Heart left ventricle (tissue), 16 donors: ENCODE measurements at regions of chr10 and their contacts with region 1.

Region 1: DNA sequence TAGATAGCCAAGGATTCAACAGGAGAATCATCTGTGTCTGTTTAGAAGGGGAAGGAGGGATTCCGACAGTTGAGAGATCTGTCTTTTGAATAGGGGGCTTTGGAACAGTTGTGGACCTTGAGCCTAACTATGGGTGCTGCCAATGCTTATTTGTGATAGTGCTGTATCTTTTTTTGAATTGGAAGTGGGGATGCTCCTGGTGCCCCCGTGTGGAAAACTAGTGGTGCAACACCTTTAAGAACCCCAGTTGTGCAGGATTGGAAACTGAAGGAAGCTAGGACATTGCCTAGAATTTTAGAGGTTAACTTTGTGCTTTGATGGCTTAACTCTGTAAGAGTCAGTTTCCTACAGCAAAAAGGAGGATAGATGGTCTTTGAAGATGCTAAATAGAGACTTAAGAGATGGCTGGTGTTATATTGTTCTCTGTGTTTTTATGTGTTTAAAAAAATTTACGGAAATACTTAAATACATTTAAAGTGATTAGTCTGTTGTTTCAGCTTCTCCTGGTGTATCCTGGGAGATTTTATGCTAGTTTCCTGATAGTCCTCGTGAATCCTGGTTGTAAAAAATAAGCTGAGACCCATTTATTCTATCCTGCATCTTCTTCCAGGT is 69.3 kb downstream of the AP3M1 start:
- DNase-seq: peak in 2 of 5 donors; percentile 42 to 48
- ATAC-seq: peak; percentile 30 to 73 (median 68)
- H3K4me3 ChIP-seq: no peak overlapping the region
- H3K27ac ChIP-seq: peak overlapping the region in 3 of 12 donors; percentile 6 to 53 (median 14)
- H3K4me1 ChIP-seq: peaks cover 10 to 54% (median 28%) of the 10 kb centered on the region in 12 donors
- H3K27me3 ChIP-seq: no peaks in the 10 kb centered on the region
- CTCF ChIP-seq: peak; percentile 59 to 87 (median 78)
- POLR2A ChIP-seq: no peak

Region 2: DNA sequence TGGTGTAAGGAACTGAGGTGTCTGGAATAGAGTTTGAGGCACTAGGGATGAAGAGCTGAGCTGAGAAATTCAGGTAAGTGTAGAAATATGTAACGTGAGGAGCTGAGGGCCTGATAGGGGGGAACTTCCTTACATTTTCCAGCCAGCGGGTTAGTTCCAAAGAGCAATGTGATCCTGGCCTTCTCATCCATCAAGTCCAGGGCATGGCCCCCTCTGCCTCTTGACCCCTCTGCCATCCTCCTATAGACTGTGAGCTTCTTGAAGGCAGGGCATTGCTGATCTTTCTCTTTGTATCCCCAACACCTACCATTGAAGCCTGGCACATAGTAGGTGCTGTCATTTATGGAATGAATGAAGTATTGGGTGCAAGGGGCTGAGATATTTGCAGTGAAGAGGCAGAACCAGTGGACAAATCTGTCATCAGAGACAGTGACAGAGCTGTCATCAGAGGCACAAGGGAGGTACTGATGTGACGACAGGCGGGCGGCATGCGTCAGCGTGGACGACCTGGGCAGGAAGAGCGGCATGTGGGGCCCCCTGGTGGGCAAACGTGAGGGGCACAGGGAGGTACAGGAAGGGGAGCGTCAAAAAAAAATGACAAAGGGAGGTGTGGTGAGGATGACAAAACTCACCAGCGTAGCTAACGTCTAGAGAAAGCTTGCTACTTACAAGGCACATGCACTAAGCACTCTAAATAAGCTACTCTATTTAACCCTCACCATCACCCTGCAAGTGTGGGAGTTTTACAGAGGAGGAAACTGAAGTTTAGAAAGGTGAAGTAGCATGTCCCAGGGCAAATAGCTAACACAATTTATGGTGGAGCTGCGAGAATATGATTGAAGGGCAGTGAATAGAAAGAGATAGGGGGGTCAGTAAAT is 201.8 kb before region 1 on chr10:
- intact Hi-C with region 1: loop called in 1 of 10 experiments (anchors 2 kb)
- DNase-seq: peak; percentile 84 to 94 (median 89)
- ATAC-seq: peak; percentile 79 to 96 (median 92)
- H3K4me3 ChIP-seq: peak overlapping the region in 1 of 12 donors; percentile 1
- H3K27ac ChIP-seq: peak overlapping the region in 1 of 12 donors; percentile 6
- H3K4me1 ChIP-seq: peaks cover 0 to 21% (median 9%) of the 10 kb centered on the region in 12 donors
- H3K27me3 ChIP-seq: no peaks in the 10 kb centered on the region
- CTCF ChIP-seq: peak; percentile 88 to 98 (median 93)
- POLR2A ChIP-seq: no peak

Region 3: GRCh38 chr10:73940634-73941221 is 140.6 kb before region 1 on chr10:
- intact Hi-C with region 1: loop called in 6 of 10 experiments (anchors 5 kb)
- DNase-seq: peak; percentile 89 to 96 (median 90)
- ATAC-seq: peak; percentile 90 to 96 (median 94)
- H3K4me3 ChIP-seq: peak overlapping the region in 7 of 12 donors; percentile 3 to 31 (median 18)
- H3K27ac ChIP-seq: peak overlapping the region in 11 of 12 donors; percentile 38 to 84 (median 72)
- H3K4me1 ChIP-seq: peaks cover 0 to 50% (median 30%) of the 10 kb centered on the region in 12 donors
- H3K27me3 ChIP-seq: no peaks in the 10 kb centered on the region
- CTCF ChIP-seq: peak; percentile 88 to 99 (median 94)
- POLR2A ChIP-seq: peak in 1 of 2 donors; percentile 29

Region 4: DNA sequence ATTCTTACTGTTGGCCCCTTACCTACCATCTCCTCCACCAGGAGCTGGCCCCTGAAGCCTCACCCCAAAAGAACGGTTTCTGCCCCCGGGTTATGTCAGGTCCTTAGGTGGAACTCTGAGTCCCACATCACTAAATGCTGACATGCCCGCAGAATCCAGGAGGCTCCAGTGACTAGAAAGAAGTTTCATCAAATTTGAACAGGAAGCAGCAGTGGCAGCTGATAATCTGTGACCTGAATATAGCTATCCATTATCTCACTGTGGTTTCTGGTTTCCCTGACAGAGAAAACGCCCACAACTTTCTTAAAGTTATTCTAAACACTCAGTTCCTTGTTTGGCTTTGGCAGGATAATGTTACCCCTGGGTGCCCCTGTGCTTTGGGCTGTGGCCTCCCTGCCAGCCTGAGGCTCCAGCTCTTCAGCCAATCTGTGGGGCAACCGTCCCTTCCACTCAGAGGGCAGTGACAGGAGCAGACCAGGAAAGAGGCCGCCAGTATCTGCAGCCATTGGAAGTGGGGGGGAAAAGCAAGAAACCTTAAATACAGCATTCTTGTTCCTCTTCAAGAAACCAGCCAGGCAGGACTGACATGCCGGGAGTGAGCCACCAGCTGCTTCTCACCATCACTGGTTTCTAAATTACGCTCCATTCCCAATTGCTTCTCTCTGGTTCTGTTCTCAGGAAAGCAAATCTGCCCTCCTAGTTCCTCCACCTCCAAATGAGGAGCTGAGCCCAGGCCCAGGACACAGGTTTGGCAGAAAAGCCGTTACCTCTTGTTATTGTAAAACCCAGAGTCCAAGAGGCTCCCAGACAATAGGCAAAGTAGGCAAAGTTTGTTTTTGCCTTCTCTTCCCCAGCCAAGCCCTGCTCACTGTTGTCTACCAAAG is 124.6 kb before region 1 on chr10:
- intact Hi-C with region 1: loop called in 1 of 10 experiments (anchors 10 kb)
- DNase-seq: peak in 1 of 5 donors; percentile 37
- ATAC-seq: peak; percentile 37 to 67 (median 58)
- H3K4me3 ChIP-seq: peak overlapping the region in 1 of 12 donors; percentile 10
- H3K27ac ChIP-seq: peak overlapping the region in 11 of 12 donors; percentile 10 to 83 (median 63)
- H3K4me1 ChIP-seq: peaks cover 0 to 43% (median 13%) of the 10 kb centered on the region in 12 donors
- H3K27me3 ChIP-seq: no peaks in the 10 kb centered on the region
- CTCF ChIP-seq: no peak
- POLR2A ChIP-seq: no peak

Region 5: DNA sequence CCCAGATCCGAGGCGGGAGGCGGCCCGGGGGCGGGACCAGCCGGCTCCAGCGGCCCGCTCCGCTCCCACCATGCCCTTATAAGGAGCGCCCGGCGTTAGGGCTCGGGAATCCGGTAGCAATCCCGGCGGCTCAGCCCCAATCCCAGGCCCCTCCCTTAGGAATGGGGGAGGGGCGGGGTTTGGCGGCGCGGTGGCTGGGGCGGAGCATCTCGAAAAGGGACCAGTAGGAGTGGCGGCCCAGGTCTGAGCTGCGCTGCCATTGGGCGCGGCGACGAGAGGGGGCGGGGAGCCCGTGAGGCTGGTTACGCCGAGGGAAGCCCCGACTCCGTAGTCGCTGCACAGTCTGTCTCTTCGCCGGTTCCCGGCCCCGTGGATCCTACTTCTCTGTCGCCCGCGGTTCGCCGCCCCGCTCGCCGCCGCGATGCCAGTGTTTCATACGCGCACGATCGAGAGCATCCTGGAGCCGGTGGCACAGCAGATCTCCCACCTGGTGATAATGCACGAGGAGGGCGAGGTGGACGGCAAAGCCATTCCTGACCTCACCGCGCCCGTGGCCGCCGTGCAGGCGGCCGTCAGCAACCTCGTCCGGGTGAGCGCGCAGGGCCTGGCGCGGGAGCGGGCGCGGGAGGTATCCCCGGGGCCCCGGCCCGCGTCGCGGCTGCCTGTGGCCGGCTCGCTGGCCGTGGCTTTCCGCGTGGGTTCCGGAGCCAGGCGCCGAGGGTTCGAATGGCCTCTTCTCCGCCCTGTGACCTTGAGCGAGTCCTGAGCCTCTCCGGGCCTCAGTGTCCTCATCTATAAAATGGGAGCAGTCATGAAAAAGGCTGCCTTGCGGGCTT is 83.3 kb before region 1 on chr10 and contains the start of gene VCL:
- intact Hi-C with region 1: loop called in 7 of 10 experiments (anchors 1 to 10 kb)
- DNase-seq: peak; percentile 98 to 99 (median 98)
- ATAC-seq: peak; percentile 96 to 97 (median 97)
- H3K4me3 ChIP-seq: peak within 1 kb of the TSS; percentile 77 to 98 (median 94)
- H3K27ac ChIP-seq: peak within 1 kb of the TSS; percentile 78 to 99 (median 93)
- H3K4me1 ChIP-seq: peaks cover 0 to 42% (median 26%) of the 10 kb centered on the region in 12 donors
- H3K27me3 ChIP-seq: no peaks in the 10 kb centered on the region
- CTCF ChIP-seq: no peak
- POLR2A ChIP-seq: peak; percentile 84 to 99
- total RNA-seq, gene VCL: 215 to 543 (median 273) TPM